Testis (tissue), 5 donors: ENCODE measurements at regions of chr6 and their contacts with region 1.

Region 1: GRCh38 chr6:35731736-35732532 is 4.9 kb upstream of the ARMC12 start:
- DNase-seq: peak; percentile 96
- H3K4me3 ChIP-seq: peak overlapping the region; percentile 53 to 72
- H3K27ac ChIP-seq: peak overlapping the region; percentile 97 to 98
- H3K4me1 ChIP-seq: peaks cover 76% of the 10 kb centered on the region
- H3K27me3 ChIP-seq: no peaks in the 10 kb centered on the region
- CTCF ChIP-seq: peak in 1 of 3 experiments; percentile 6
- POLR2A ChIP-seq: no peak

Region 2: DNA sequence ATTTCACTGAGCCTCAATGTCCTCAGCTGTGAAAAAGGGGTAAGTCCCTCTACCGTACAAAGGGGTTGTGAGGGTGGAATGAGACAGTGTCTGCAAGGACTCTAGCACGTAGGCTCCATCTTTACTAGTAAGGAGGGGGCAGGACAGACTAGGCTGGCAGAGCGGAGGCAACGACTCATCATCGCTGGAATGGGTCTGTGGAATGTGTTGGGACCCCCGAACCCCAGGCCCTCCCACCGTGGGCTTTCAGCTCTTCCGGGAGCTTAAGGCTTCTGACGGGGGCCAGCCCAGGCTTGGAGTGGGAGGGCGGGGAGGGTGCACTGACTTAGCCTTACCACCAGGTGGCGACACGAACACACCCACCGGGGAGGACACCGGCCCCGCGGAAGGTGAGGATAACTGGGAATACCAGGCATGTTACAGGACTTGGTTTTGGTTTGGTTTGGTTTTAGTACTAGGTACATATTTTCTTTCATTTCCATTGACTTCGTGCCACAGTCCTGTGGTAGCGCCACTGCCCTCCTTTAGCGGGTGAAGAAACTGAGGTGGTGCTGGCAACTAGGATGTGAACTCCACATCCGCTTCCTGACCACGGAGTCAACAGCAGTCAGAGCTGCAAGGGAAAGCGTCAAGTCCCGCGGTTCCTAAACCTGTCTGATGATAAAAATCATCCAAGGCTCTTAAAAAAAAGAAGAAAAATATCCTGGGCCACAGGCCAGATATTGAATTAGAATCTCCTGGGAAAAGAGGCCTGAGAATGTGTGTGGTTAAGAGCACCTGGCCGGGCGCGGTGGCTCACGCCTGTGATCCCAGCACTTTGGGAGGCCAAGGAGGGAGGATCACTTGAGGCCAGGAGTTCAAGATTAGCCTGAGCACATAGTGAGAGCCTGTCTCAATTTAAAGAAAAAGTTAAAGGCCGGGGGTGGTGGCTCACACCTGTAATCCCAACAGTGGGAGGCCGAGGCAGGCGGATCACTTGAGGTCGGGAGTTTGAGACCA is 209.0 kb before region 1 on chr6:
- intact Hi-C with region 1: loop called (anchors 5 kb)
- DNase-seq: peak; percentile 86
- H3K4me3 ChIP-seq: peak overlapping the region; percentile 12 to 41
- H3K27ac ChIP-seq: no peak overlapping the region
- H3K4me1 ChIP-seq: no peaks in the 10 kb centered on the region
- H3K27me3 ChIP-seq: no peaks in the 10 kb centered on the region
- CTCF ChIP-seq: peak; percentile 97 to 100 (median 98)
- POLR2A ChIP-seq: no peak

Region 3: GRCh38 chr6:35586546-35586945 is 145.4 kb before region 1 on chr6:
- intact Hi-C with region 1: loop called (anchors 5 kb)
- DNase-seq: no peak
- H3K4me3 ChIP-seq: no peak overlapping the region
- H3K27ac ChIP-seq: peak overlapping the region in 1 of 2 donors; percentile 97
- H3K4me1 ChIP-seq: peaks cover 63% of the 10 kb centered on the region
- H3K27me3 ChIP-seq: no peaks in the 10 kb centered on the region
- CTCF ChIP-seq: no peak
- POLR2A ChIP-seq: no peak

Region 4: GRCh38 chr6:35601331-35602132 is 130.4 kb before region 1 on chr6:
- intact Hi-C with region 1: loop called (anchors 5 kb)
- DNase-seq: peak; percentile 77
- H3K4me3 ChIP-seq: no peak overlapping the region
- H3K27ac ChIP-seq: peak overlapping the region; percentile 96 to 97
- H3K4me1 ChIP-seq: peaks cover 63% of the 10 kb centered on the region
- H3K27me3 ChIP-seq: no peaks in the 10 kb centered on the region
- CTCF ChIP-seq: no peak
- POLR2A ChIP-seq: no peak

Region 5: GRCh38 chr6:35688581-35689322 is 43.2 kb before region 1 on chr6 and contains the start of gene FKBP5:
- intact Hi-C with region 1: loop called (anchors 5 kb)
- DNase-seq: peak; percentile 99
- H3K4me3 ChIP-seq: peak within 1 kb of the TSS; percentile 96 to 100
- H3K27ac ChIP-seq: peak within 1 kb of the TSS; percentile 99 to 100
- H3K4me1 ChIP-seq: peaks cover 21% of the 10 kb centered on the region
- H3K27me3 ChIP-seq: no peaks in the 10 kb centered on the region
- CTCF ChIP-seq: no peak
- POLR2A ChIP-seq: peak; percentile 91
- total RNA-seq, gene FKBP5: 156 to 185 TPM